Heart right ventricle (tissue), 16 donors: ENCODE measurements at regions of chr19 and their contacts with region 1.

Region 1: GRCh38 chr19:53076977-53077376 is 26.2 kb downstream of the ZNF160 start:
- DNase-seq: peak; percentile 55 to 63
- ATAC-seq: peak in 7 of 8 donors; percentile 32 to 84 (median 76)
- H3K4me3 ChIP-seq: no peak overlapping the region
- H3K27ac ChIP-seq: peak overlapping the region in 4 of 10 donors; percentile 34 to 72 (median 62)
- H3K4me1 ChIP-seq: peaks cover 0 to 38% (median 4%) of the 10 kb centered on the region in 9 donors
- H3K27me3 ChIP-seq: no peaks in the 10 kb centered on the region
- CTCF ChIP-seq: peak; percentile 63 to 85 (median 78)

Region 2: DNA sequence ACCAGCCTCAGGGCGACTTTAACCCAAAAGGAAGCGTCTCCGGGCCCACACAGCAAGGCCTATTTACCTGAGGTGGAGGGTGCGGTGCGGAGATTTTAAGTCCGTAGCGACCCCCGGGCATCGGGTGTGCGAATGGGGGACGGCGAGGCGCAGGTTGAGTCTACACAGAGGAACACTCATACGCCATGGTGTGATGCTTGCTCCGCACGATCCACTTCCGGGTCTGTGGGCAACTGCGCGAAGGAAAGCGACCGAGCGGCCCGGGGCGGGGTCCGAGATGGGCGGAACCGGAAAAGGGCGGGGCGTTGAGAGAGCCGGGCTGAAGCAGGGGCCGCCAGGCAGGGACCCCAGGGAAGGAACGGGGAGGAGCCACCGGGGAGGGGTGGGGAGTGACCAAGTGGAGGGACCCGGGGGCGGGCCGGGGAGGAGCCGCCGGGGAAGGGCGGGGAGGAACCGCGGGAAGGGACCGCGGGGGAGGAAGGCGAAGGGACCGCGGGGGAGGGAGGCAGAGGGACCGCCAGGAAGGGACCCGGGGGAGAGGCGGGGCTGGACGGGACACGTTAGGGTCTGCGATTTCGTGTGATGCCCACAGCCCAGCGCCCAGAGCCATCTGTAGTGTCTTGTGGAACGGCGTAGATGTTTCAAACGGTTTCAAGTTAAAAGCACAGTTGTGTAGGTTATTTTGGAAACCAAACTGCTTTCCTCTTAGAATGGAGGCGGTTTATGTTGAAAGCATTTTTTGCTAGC is 26.4 kb after region 1 on chr19 and contains the start of gene ZNF160:
- intact Hi-C with region 1: loop called in 1 of 10 experiments (anchors 2 kb)
- DNase-seq: peak; percentile 100
- ATAC-seq: peak; percentile 99
- H3K4me3 ChIP-seq: peak within 1 kb of the TSS; percentile 75 to 97 (median 85)
- H3K27ac ChIP-seq: peak within 1 kb of the TSS; percentile 84 to 98 (median 94)
- H3K4me1 ChIP-seq: peaks cover 9 to 46% (median 25%) of the 10 kb centered on the region in 9 donors
- H3K27me3 ChIP-seq: no peaks in the 10 kb centered on the region
- CTCF ChIP-seq: no peak
- total RNA-seq, gene ZNF160: 9.8 to 22.9 (median 18.5) TPM

Region 3: DNA sequence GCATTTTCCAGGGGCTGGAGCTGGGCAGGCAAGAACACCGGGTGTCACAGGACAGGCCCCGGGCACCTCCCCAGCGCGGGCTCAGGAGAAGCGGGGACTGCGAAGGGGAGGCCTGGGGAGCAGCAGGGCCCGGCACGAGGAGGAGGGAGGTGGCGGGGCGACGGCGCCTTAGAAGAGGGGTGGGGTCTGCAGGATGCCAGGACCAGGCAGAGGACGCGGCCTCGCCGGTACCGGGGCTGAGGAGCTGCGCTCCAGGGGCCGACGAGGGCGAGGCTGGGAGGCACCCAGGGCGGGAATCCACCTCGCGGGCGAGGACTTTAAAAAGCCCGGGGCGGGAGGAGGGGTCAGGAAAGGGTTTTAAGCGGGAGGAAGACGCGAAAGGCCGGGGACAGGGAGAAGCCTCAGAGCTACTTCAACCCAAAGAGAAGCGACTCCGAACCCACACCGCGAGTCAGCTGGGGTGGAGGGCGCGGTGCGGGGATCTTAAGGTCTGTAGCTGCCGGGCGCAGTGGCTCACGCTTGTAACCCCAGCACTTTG is 81.2 kb after region 1 on chr19:
- intact Hi-C with region 1: loop called in 2 of 10 experiments (anchors 5 to 10 kb)
- DNase-seq: peak; percentile 23 to 47
- ATAC-seq: peak; percentile 31 to 68 (median 50)
- H3K4me3 ChIP-seq: peak overlapping the region; percentile 65 to 84 (median 74)
- H3K27ac ChIP-seq: peak overlapping the region; percentile 66 to 85 (median 80)
- H3K4me1 ChIP-seq: peaks cover 0 to 26% (median 18%) of the 10 kb centered on the region in 9 donors
- H3K27me3 ChIP-seq: no peaks in the 10 kb centered on the region
- CTCF ChIP-seq: no peak

Region 4: GRCh38 chr19:53172892-53173291 is 95.9 kb after region 1 on chr19:
- intact Hi-C with region 1: loop called in 1 of 10 experiments (anchors 10 kb)
- DNase-seq: no peak
- ATAC-seq: no peak
- H3K4me3 ChIP-seq: no peak overlapping the region
- H3K27ac ChIP-seq: no peak overlapping the region
- H3K4me1 ChIP-seq: no peaks in the 10 kb centered on the region
- H3K27me3 ChIP-seq: no peaks in the 10 kb centered on the region
- CTCF ChIP-seq: no peak

Region 5: GRCh38 chr19:53455828-53456227 is 378.9 kb after region 1 on chr19:
- intact Hi-C with region 1: no loop called
- DNase-seq: no peak
- ATAC-seq: no peak
- H3K4me3 ChIP-seq: no peak overlapping the region
- H3K27ac ChIP-seq: no peak overlapping the region
- H3K4me1 ChIP-seq: no peaks in the 10 kb centered on the region
- H3K27me3 ChIP-seq: no peaks in the 10 kb centered on the region
- CTCF ChIP-seq: no peak